B cell (primary cell): ENCODE measurements at regions of chr5 and their contacts with region 1.

Region 1: GRCh38 chr5:126656396-126657007 is 55.8 kb downstream of the PHAX start:
- DNase-seq: peak; percentile 53
- ATAC-seq: peak; percentile 28
- H3K4me3 ChIP-seq: no peak overlapping the region
- H3K4me3 Mint-ChIP-seq: no peak overlapping the region
- H3K27ac ChIP-seq: no peak overlapping the region
- H3K27ac Mint-ChIP-seq: no peak overlapping the region
- H3K4me1 ChIP-seq: no peaks in the 10 kb centered on the region
- H3K4me1 Mint-ChIP-seq: peaks cover 5% of the 10 kb centered on the region
- H3K27me3 ChIP-seq: no peaks in the 10 kb centered on the region
- H3K27me3 Mint-ChIP-seq: peaks cover 3% of the 10 kb centered on the region
- CTCF ChIP-seq: peak; percentile 89

Region 2: GRCh38 chr5:126403876-126404275 is 252.6 kb before region 1 on chr5:
- CTCF ChIA-PET with region 1: no interaction called
- POLR2A ChIA-PET with region 1: no interaction called
- intact Hi-C with region 1: no loop called
- DNase-seq: no peak
- ATAC-seq: no peak
- H3K4me3 ChIP-seq: no peak overlapping the region
- H3K4me3 Mint-ChIP-seq: no peak overlapping the region
- H3K27ac ChIP-seq: no peak overlapping the region
- H3K27ac Mint-ChIP-seq: no peak overlapping the region
- H3K4me1 ChIP-seq: no peaks in the 10 kb centered on the region
- H3K4me1 Mint-ChIP-seq: no peaks in the 10 kb centered on the region
- H3K27me3 ChIP-seq: peaks cover 0 to 5% (median under 1%) of the 10 kb centered on the region in 4 experiments
- H3K27me3 Mint-ChIP-seq: peaks cover 22% of the 10 kb centered on the region
- CTCF ChIP-seq: no peak

Region 3: DNA sequence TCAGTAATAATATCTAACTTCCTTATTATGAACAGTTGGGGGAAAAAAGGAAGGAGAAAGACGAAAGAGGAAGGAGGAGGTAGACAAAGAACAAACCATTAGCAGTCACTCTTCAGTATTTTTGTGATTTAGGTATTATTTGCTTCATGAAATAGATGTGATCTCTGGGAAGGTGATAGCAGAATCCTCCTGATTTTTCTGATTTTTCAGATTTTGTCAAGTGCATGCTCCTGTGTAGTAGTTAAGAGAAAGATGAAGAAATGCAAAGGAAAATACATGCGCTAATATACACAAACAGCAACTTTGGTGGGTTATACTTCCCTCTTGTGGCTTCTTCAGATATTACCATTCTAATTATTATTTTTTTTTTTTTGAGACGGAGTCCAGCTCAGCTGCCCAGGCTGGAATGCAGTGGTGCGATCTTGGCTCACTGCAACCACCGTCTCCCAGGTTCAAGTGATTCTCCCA is 152.1 kb after region 1 on chr5:
- CTCF ChIA-PET with region 1: interaction called, 16 read pairs
- POLR2A ChIA-PET with region 1: no interaction called
- intact Hi-C with region 1: loop called (anchors 1 kb)
- DNase-seq: peak; percentile 73
- ATAC-seq: peak; percentile 59
- H3K4me3 ChIP-seq: peak overlapping the region; percentile 8 to 61 (median 33)
- H3K4me3 Mint-ChIP-seq: peak overlapping the region; percentile 79
- H3K27ac ChIP-seq: peak overlapping the region; percentile 60 to 77
- H3K27ac Mint-ChIP-seq: peak overlapping the region; percentile 84
- H3K4me1 ChIP-seq: peaks cover 15 to 35% of the 10 kb centered on the region in 2 donors
- H3K4me1 Mint-ChIP-seq: peaks cover 55% of the 10 kb centered on the region
- H3K27me3 ChIP-seq: no peaks in the 10 kb centered on the region
- H3K27me3 Mint-ChIP-seq: no peaks in the 10 kb centered on the region
- CTCF ChIP-seq: peak; percentile 79

Region 4: GRCh38 chr5:127373858-127374491 is 717.5 kb after region 1 on chr5:
- CTCF ChIA-PET with region 1: no interaction called
- POLR2A ChIA-PET with region 1: no interaction called
- intact Hi-C with region 1: no loop called
- DNase-seq: no peak
- ATAC-seq: no peak
- H3K4me3 ChIP-seq: no peak overlapping the region
- H3K4me3 Mint-ChIP-seq: no peak overlapping the region
- H3K27ac ChIP-seq: no peak overlapping the region
- H3K27ac Mint-ChIP-seq: no peak overlapping the region
- H3K4me1 ChIP-seq: no peaks in the 10 kb centered on the region
- H3K4me1 Mint-ChIP-seq: no peaks in the 10 kb centered on the region
- H3K27me3 ChIP-seq: peaks cover 0 to 2% (median 0%) of the 10 kb centered on the region in 4 experiments
- H3K27me3 Mint-ChIP-seq: peaks cover 9% of the 10 kb centered on the region
- CTCF ChIP-seq: no peak

Region 5: DNA sequence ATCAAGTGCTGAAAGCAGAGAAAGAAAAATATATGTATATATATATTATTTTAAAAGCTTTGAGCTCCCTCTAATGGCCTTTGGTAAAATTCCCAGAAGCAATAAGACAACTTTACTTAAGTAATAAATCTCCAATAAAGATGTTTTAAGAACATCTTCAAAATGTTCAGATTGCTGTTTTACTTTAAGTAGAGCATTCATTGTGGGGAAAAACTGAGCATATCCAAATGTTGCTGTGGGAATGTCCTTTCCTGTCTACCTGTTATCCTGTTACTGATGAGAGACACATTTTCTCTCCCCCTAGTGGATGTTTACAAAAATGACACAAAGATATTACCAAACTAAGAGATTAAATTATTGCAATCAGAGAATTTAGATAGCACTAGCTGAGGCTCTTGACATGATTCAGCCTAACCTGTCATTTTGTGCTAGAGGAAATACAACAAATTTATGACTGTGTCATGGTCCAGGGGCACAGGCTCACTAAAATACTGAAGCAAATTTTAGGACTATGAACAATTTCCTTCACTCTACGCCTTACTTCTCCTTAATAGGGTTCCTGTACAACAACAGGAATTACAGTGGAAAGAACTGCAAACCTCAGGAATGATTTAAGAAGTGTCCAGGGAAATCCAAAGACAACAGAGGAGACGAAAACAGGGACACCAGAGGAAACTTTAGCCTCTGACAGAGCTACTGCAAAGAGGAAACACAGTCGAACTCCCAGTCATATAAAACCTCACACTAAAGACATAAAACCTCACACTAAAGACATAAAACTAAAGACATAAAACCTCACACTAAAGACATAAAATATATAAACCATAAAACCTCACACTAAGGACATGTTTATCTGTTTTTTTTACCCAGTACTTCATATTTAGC is 836.6 kb after region 1 on chr5:
- CTCF ChIA-PET with region 1: interaction called, 16 read pairs
- POLR2A ChIA-PET with region 1: no interaction called
- intact Hi-C with region 1: loop called (anchors 1 kb)
- DNase-seq: peak; percentile 68
- ATAC-seq: peak; percentile 45
- H3K4me3 ChIP-seq: no peak overlapping the region
- H3K4me3 Mint-ChIP-seq: no peak overlapping the region
- H3K27ac ChIP-seq: no peak overlapping the region
- H3K27ac Mint-ChIP-seq: no peak overlapping the region
- H3K4me1 ChIP-seq: no peaks in the 10 kb centered on the region
- H3K4me1 Mint-ChIP-seq: no peaks in the 10 kb centered on the region
- H3K27me3 ChIP-seq: peaks cover 0 to 6% (median 2%) of the 10 kb centered on the region in 4 experiments
- H3K27me3 Mint-ChIP-seq: peaks cover 23% of the 10 kb centered on the region
- CTCF ChIP-seq: peak; percentile 100